A549 (cell line): ENCODE measurements at regions of chr19 and their contacts with region 1.

Region 1: GRCh38 chr19:29851769-29852521 is 40.2 kb downstream of the CCNE1 start:
- DNase-seq: no peak
- ATAC-seq: no peak
- H3K4me3 ChIP-seq: no peak overlapping the region
- H3K27ac ChIP-seq: no peak overlapping the region
- H3K4me1 ChIP-seq: no peaks in the 10 kb centered on the region
- CTCF ChIP-seq: no peak
- EP300 ChIP-seq: no peak
- POLR2A ChIP-seq: no peak
- RAD21 ChIP-seq: no peak

Region 2: DNA sequence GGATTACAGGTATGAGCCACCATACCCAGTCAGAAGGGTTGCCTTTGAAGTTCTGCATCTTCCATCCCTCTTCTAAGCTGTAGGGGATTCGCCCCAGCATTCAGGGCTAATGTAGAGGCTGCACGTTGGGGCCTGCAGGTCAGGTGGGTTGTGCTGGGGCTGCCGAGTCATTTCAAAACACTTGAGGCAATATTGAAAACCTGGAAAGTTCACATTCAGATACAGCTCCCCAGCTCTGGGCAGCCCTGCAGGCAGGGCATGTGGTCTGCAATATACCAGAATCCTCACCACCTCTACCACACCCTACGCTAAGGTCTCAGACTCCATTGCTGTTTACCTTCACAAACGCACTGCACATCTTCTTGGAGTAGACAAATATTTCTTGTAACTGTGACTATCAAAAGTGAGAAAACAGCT is 15.5 kb before region 1 on chr19:
- CTCF ChIA-PET with region 1: interaction called, 11 read pairs
- POLR2A ChIA-PET with region 1: no interaction called
- DNase-seq: no peak
- ATAC-seq: no peak
- H3K4me3 ChIP-seq: no peak overlapping the region
- H3K27ac ChIP-seq: no peak overlapping the region
- H3K4me1 ChIP-seq: peaks cover 10% of the 10 kb centered on the region
- CTCF ChIP-seq: no peak
- EP300 ChIP-seq: no peak
- POLR2A ChIP-seq: no peak
- RAD21 ChIP-seq: no peak